Endothelial cell of umbilical vein (primary cell): ENCODE measurements at regions of chr4 and their contacts with region 1.

Region 1: DNA sequence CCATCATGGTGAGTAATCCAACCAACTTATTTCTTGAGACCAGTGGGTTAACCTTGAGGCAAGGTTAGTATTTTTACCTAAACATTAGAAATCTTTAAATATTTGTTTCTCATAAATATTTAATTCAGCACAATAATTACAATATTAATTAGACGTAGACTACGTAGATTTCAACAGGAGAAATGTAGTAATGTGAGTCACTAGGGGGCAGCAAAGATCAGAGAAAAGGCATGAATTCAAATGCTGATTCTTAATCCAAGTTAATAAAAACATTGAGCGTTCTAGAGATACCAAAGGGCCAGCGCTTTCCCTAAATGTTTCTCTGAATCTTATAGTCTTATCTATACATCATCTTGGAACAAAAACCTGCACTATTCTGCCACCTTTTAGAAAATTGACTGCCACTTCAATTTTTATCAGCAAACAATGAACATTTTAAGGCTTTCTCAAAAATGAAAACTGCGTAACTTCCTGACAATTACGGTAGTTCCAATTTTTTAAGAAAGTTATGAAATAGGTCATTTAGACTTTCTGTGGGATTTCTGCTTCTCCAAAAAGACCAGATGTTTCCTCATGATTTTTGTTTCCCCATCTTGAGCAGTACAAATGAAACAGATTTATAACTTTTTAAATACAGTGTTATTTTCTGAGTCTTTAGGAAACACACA is 180.7 kb downstream of the GASK1B start:
- DNase-seq: peak; percentile 92
- H3K4me3 ChIP-seq: peak overlapping the region; percentile 12 to 61 (median 21)
- H3K27ac ChIP-seq: peak overlapping the region; percentile 32
- H3K4me1 ChIP-seq: peaks cover 37% of the 10 kb centered on the region
- H3K27me3 ChIP-seq: no peaks in the 10 kb centered on the region
- CTCF ChIP-seq: peak; percentile 36 to 41
- POLR2A ChIP-seq: no peak

Region 2: GRCh38 chr4:157806184-157806583 is 186.0 kb before region 1 on chr4:
- CTCF ChIA-PET with region 1: no interaction called
- POLR2A ChIA-PET with region 1: no interaction called
- dilution Hi-C with region 1: no loop called
- intact Hi-C with region 1: no loop called
- DNase-seq: no peak
- H3K4me3 ChIP-seq: no peak overlapping the region
- H3K27ac ChIP-seq: no peak overlapping the region
- H3K4me1 ChIP-seq: peaks cover 5% of the 10 kb centered on the region
- H3K27me3 ChIP-seq: no peaks in the 10 kb centered on the region
- CTCF ChIP-seq: no peak
- POLR2A ChIP-seq: no peak

Region 3: DNA sequence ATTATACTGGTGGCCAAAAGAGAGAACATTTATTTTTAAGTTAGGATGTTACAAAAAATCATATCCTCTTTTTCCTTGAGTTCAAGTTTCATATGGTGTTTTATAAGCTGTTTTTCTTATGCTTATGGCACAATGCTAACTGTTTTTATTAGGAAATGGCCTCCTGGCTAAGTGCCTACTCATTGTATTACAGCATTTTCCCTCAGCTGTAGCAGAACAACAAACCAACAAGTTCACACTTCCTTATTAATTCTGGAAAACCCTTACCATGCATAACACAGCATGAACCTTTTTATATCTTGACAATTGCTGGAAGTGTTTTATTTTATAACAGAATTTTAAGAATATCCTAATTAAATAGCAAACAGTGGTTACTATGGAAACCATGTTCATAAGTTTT is 14.8 kb after region 1 on chr4:
- CTCF ChIA-PET with region 1: interaction called, 3 read pairs
- POLR2A ChIA-PET with region 1: no interaction called
- dilution Hi-C with region 1: no loop called
- intact Hi-C with region 1: loop called (anchors 1 kb)
- DNase-seq: peak; percentile 100
- H3K4me3 ChIP-seq: no peak overlapping the region
- H3K27ac ChIP-seq: peak overlapping the region; percentile 75
- H3K4me1 ChIP-seq: peaks cover 36% of the 10 kb centered on the region
- H3K27me3 ChIP-seq: no peaks in the 10 kb centered on the region
- CTCF ChIP-seq: no peak
- POLR2A ChIP-seq: no peak

Region 4: DNA sequence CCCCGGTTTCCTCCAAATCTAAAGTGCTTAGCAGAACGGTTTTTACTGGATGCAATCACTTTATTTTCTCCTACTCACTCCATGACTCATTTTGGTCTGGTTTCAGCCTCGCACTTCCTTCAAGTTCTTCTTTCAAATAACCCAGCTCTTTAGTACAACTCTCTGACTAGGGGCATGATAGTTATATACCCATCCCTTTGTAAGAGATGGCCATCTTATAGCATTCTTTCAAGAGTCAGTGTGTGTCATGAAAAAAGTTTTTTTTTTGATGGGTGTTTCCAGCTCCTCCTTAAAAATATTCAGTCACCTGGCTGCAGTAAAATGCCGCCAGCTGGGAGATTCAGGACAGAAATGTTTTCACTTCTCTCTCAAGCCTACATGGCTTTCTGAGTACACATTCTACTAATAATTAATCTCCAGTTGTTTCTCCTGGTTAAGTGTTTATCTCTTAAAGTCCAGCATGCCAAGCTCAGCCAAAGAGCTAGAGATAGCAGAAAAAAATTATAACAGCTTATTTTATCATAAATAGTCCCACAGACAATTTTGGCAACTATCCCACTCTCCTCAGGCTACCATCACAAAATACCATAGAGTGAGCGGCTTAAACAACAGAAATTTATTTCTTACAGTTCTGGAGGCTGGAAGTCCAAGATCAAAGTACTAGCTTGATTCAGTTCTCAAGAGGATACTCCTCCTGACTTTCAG is 41.4 kb after region 1 on chr4:
- CTCF ChIA-PET with region 1: no interaction called
- POLR2A ChIA-PET with region 1: no interaction called
- dilution Hi-C with region 1: no loop called
- intact Hi-C with region 1: loop called (anchors 1 kb)
- DNase-seq: peak; percentile 96
- H3K4me3 ChIP-seq: peak overlapping the region in 1 of 3 experiments; percentile 11
- H3K27ac ChIP-seq: peak overlapping the region; percentile 85
- H3K4me1 ChIP-seq: peaks cover 29% of the 10 kb centered on the region
- H3K27me3 ChIP-seq: no peaks in the 10 kb centered on the region
- CTCF ChIP-seq: no peak
- POLR2A ChIP-seq: no peak

Region 5: DNA sequence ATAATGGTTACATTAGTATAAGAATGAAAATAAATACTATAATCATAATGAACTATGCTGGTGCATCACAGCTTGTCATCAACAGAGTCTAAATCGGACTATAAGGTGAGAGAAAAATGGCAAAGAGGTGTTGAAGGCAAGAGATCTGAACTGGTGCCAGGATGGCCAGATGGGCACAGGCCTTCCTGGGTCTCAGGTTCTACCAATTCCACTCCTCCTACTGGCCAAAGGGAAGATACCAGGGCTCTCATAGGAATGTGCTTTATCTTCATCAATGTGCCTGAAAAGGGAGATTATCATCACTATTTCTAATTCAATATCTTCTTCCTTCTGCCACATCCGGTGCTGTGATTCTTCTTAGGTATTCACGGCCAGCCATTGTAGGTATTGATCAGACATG is 73.0 kb after region 1 on chr4:
- CTCF ChIA-PET with region 1: no interaction called
- POLR2A ChIA-PET with region 1: no interaction called
- dilution Hi-C with region 1: no loop called
- intact Hi-C with region 1: loop called (anchors 1 kb)
- DNase-seq: no peak
- H3K4me3 ChIP-seq: no peak overlapping the region
- H3K27ac ChIP-seq: peak overlapping the region; percentile 74
- H3K4me1 ChIP-seq: peaks cover 26% of the 10 kb centered on the region
- H3K27me3 ChIP-seq: no peaks in the 10 kb centered on the region
- CTCF ChIP-seq: peak in 1 of 2 donors; percentile 19
- POLR2A ChIP-seq: no peak

Region 6: GRCh38 chr4:158193171-158193749 is 201.1 kb after region 1 on chr4:
- CTCF ChIA-PET with region 1: no interaction called
- POLR2A ChIA-PET with region 1: no interaction called
- dilution Hi-C with region 1: no loop called
- intact Hi-C with region 1: loop called (anchors 1 kb)
- DNase-seq: peak; percentile 58
- H3K4me3 ChIP-seq: no peak overlapping the region
- H3K27ac ChIP-seq: no peak overlapping the region
- H3K4me1 ChIP-seq: no peaks in the 10 kb centered on the region
- H3K27me3 ChIP-seq: no peaks in the 10 kb centered on the region
- CTCF ChIP-seq: peak; percentile 38 to 40
- POLR2A ChIP-seq: no peak

Region 7: GRCh38 chr4:158371158-158371557 is 379.0 kb after region 1 on chr4:
- CTCF ChIA-PET with region 1: no interaction called
- POLR2A ChIA-PET with region 1: no interaction called
- dilution Hi-C with region 1: no loop called
- intact Hi-C with region 1: loop called (anchors 5 kb)
- DNase-seq: peak; percentile 66
- H3K4me3 ChIP-seq: no peak overlapping the region
- H3K27ac ChIP-seq: peak overlapping the region; percentile 76
- H3K4me1 ChIP-seq: peaks cover 22% of the 10 kb centered on the region
- H3K27me3 ChIP-seq: no peaks in the 10 kb centered on the region
- CTCF ChIP-seq: no peak
- POLR2A ChIP-seq: no peak